ENCODE measurements at regions of chr9 and their contacts with region 1.

Region 1: DNA sequence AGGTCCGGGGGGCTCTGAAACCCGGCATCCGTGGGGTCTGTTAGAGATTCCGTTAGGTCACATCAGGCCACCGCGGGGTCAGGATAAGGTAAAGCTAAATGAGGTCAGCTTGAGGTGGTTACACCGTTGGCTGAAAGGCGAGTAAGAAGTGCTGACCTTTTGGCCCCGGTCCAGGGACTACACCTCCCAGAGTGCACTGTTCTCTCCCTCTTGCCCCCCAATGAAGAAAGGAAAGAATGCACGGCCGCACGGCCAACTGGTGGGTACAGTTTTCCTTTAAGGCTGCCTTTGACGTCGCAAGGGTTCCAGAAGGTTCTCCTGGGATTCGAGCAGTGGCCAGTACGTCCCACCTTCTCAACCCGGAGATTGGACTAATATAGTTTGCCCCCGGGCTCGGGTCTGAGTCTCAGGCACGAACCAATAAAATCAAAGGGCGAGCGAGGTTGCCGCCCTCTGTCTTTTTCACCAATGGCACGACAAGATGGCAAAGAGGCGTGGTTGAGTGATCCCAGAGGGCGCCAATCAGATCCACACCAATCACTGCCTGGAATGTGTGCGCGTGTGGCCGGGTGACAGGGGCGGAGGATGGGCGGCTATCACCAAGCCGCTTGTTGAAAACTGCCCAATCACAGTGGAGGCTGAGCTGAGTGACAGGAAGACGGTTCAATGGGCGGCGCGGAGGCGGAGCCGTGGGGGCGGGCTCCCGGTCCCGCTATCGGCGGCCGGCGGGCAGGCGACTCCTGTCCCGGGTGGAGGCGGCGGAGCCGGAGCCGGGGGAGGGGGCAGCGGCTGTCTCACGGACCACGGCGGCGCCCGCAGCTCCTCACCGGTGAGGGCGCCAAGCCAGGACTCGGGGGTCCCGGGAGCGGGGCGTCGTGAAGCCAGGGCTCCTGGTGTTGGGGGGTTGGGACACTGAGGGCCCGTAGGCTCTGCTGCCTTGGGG is at the start of gene DNAJB5:
- DNase-seq: peak; percentile 99
- H3K4me3 ChIP-seq: peak within 1 kb of the TSS; percentile 95 to 96
- H3K27ac ChIP-seq: peak within 1 kb of the TSS; percentile 90 to 93
- H3K4me1 ChIP-seq: no peaks in the 10 kb centered on the region
- H3K27me3 ChIP-seq: no peaks in the 10 kb centered on the region
- CTCF ChIP-seq: no peak
- POLR2A ChIP-seq: peak; percentile 70
- total RNA-seq, gene DNAJB5: 16.5 to 43.3 TPM

Region 2: DNA sequence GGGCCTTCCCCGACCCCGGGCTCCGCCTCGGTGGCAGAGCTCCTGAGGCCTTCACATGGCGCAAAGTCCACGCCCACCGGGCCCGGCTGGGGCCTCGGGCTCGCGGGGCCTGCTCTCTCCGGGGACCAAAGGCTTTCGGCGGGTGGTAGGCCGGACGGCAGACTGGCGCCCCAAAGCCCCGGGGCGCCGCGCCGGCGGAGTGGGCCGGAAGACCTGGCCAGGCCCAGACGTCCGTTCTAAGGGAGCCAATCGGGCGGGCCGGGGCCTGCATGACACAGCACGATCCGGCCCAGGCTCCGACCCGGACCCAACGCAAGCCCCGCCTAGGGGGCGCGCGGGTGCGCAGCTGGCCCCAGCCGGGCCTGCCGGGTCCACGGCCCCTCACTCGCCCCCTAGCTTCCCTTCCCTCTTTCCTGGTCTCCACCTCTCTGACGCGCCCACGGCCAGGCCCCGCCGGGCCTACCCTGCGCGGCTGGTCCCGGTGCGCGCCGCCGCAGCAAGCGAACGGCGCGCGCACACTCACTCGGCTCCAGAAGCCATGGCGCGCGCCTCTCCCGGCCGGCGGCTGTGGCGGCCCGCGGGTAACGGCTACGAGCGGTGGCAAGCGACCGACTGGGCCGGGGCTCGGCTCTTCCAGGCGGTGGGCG is 82.7 kb after region 1 on chr9:
- intact Hi-C with region 1: loop called (anchors 2 kb)
- DNase-seq: peak; percentile 78
- H3K4me3 ChIP-seq: peak overlapping the region; percentile 96 to 97
- H3K27ac ChIP-seq: peak overlapping the region; percentile 97 to 99
- H3K4me1 ChIP-seq: peaks cover 14% of the 10 kb centered on the region
- H3K27me3 ChIP-seq: no peaks in the 10 kb centered on the region
- CTCF ChIP-seq: peak in 3 of 4 experiments; percentile 21 to 49 (median 48)
- POLR2A ChIP-seq: peak; percentile 62

Measured in prostate gland (tissue), 2 donors.